ENCODE measurements at regions of chr9 and their contacts with region 1.

Region 1: GRCh38 chr9:90914868-90915483 is 113.4 kb downstream of the SYK start:
- DNase-seq: peak; percentile 87

Region 2: GRCh38 chr9:91424403-91425176 is 509.6 kb after region 1 on chr9:
- CTCF ChIA-PET with region 1: interaction called, 12 read pairs
- POLR2A ChIA-PET with region 1: interaction called, 4 read pairs
- DNase-seq: peak; percentile 46